CD8-positive, alpha-beta memory T cell (primary cell): ENCODE measurements at regions of chr2 and their contacts with region 1.

Region 1: DNA sequence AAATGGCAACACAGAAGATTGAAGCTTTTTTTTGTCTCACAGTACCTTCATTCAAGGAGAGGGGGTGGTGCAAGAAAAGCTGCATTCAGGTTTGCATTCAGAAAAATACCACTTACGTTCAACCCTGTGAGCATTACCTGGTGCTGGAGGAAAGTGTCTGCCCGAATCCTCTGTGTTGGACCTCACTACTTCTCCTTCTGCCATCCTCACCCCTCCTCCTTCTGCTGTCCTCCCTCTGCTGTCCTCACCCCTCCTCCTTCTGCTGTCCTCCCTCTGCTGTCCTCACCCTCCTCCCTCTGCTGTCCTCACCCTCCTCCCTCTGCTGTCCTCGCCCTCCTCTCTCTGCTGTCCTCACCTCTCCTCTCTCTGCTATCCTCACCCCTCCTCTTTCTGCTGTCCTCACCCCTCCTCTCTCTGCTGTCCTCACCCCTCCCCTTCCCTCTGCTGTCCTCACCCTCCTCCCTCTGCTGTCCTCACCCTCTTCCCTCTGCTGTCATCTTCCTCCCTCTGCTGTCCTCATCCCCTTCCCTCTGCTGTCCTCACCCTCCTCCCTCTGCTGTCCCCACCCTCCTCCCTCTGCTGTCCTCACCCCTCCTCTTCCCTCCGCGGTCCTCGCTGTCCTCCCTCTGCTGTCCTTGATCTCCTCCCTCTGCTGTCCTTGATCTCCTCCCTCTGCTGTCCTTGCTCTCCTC is 11.3 kb downstream of the GAD1 start:
- DNase-seq: no peak
- H3K4me3 ChIP-seq: no peak overlapping the region
- H3K4me3 Mint-ChIP-seq: no peak overlapping the region
- H3K27ac ChIP-seq: no peak overlapping the region
- H3K27ac Mint-ChIP-seq: no peak overlapping the region
- H3K4me1 ChIP-seq: peaks cover 1% of the 10 kb centered on the region
- H3K4me1 Mint-ChIP-seq: peaks cover 0 to 7% (median 1%) of the 10 kb centered on the region in 3 donors
- H3K27me3 ChIP-seq: peaks cover 5% of the 10 kb centered on the region
- H3K27me3 Mint-ChIP-seq: peaks cover 53 to 76% of the 10 kb centered on the region in 2 donors

Region 2: DNA sequence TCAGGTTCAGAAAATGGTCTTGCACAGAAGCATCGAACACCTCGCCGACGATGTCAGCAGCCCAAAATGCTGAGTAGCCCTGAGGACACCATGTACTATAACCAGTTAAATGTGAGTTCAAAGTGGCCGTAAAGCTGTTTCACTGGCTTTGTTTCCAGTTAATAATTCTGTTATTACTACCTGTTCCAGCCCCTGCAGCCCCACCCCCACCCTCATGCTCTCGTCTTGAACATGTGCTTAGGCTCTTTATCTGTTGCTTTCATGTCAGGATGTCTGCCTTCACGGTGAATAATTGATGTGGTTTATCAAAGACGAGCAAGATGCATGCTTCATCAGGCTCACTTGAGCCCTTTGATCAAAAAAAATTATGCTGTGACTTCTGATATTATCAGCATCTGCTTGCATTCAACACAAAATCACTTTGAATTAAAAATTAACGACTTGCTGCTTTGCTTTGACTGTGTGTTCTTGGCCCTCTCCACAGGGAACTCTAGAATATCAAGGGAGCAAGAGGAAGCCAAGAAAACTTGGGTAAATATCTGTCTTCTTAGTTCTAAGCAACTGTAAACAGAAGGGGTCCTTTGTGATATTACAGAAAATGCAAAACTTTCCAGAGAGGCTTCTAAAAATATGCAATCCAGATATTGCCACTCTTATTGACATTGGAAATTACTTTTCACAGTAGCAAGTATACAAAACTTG is 176.2 kb before region 1 on chr2:
- CTCF ChIA-PET with region 1: no interaction called
- POLR2A ChIA-PET with region 1: interaction called, 10 read pairs
- DNase-seq: peak in 3 of 5 donors; percentile 49 to 82 (median 68)
- H3K4me3 ChIP-seq: no peak overlapping the region
- H3K4me3 Mint-ChIP-seq: peak overlapping the region in 3 of 7 donors; percentile 13 to 16 (median 15)
- H3K27ac ChIP-seq: no peak overlapping the region
- H3K27ac Mint-ChIP-seq: peak overlapping the region in 3 of 8 donors; percentile 25 to 75 (median 26)
- H3K4me1 ChIP-seq: peaks cover 20% of the 10 kb centered on the region
- H3K4me1 Mint-ChIP-seq: peaks cover 15 to 27% (median 22%) of the 10 kb centered on the region in 3 donors
- H3K27me3 ChIP-seq: peaks cover 3% of the 10 kb centered on the region
- H3K27me3 Mint-ChIP-seq: peaks cover 6 to 8% of the 10 kb centered on the region in 2 donors

Region 3: DNA sequence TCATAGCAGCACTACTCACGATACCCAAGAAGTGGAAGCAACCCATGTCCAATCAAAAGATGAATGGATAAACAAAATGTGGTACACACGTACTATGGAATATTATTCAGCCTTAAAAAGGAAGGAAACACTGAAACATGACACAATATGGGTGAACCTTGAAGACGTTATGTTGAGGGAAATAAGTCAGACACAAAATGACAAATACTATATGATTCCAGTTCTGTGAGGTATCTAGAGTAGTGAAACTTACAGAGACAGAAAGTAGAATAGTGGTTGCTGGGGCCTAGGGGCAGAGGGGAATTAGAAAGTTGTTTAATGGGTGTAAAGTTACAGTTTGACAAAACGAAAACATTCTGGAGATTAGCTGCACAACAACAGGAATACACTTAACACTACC is 308.0 kb after region 1 on chr2:
- CTCF ChIA-PET with region 1: no interaction called
- POLR2A ChIA-PET with region 1: no interaction called
- DNase-seq: no peak
- H3K4me3 ChIP-seq: no peak overlapping the region
- H3K4me3 Mint-ChIP-seq: peak overlapping the region in 6 of 7 donors; percentile 15 to 68 (median 26)
- H3K27ac ChIP-seq: no peak overlapping the region
- H3K27ac Mint-ChIP-seq: peak overlapping the region in 4 of 8 donors; percentile 1 to 87 (median 48)
- H3K4me1 ChIP-seq: peaks cover 37% of the 10 kb centered on the region
- H3K4me1 Mint-ChIP-seq: peaks cover 64 to 92% (median 89%) of the 10 kb centered on the region in 3 donors
- H3K27me3 ChIP-seq: no peaks in the 10 kb centered on the region
- H3K27me3 Mint-ChIP-seq: peaks cover 0 to 2% of the 10 kb centered on the region in 2 donors